ENCODE measurements at regions of chr7 and their contacts with region 1.

Region 1: GRCh38 chr7:55964261-55965099 is at the start of gene NIPSNAP2:
- DNase-seq: peak; percentile 24 to 81 (median 56)
- ATAC-seq: peak; percentile 93
- H3K4me3 ChIP-seq: peak within 1 kb of the TSS; percentile 59 to 63
- H3K4me3 Mint-ChIP-seq: peak within 1 kb of the TSS; percentile 87
- H3K27ac ChIP-seq: peak within 1 kb of the TSS; percentile 64 to 85
- H3K27ac Mint-ChIP-seq: peak within 1 kb of the TSS; percentile 93
- H3K4me1 ChIP-seq: peaks cover 15% of the 10 kb centered on the region
- H3K4me1 Mint-ChIP-seq: peaks cover 42% of the 10 kb centered on the region
- H3K27me3 ChIP-seq: no peaks in the 10 kb centered on the region
- H3K27me3 Mint-ChIP-seq: no peaks in the 10 kb centered on the region
- CTCF ChIP-seq: peak; percentile 45
- total RNA-seq, gene NIPSNAP2: 36.5 to 38.9 TPM

Region 2: GRCh38 chr7:55280031-55280454 is 684.4 kb before region 1 on chr7:
- CTCF ChIA-PET with region 1: no interaction called
- POLR2A ChIA-PET with region 1: no interaction called
- intact Hi-C with region 1: loop called in 1 of 2 experiments (anchors 5 kb)
- DNase-seq: peak; percentile 26 to 82 (median 62)
- ATAC-seq: peak; percentile 74
- H3K4me3 ChIP-seq: no peak overlapping the region
- H3K4me3 Mint-ChIP-seq: no peak overlapping the region
- H3K27ac ChIP-seq: no peak overlapping the region
- H3K27ac Mint-ChIP-seq: no peak overlapping the region
- H3K4me1 ChIP-seq: no peaks in the 10 kb centered on the region
- H3K4me1 Mint-ChIP-seq: peaks cover 2% of the 10 kb centered on the region
- H3K27me3 ChIP-seq: no peaks in the 10 kb centered on the region
- H3K27me3 Mint-ChIP-seq: no peaks in the 10 kb centered on the region
- CTCF ChIP-seq: peak; percentile 75

Region 3: GRCh38 chr7:55572378-55573233 is 391.9 kb before region 1 on chr7 and contains the start of gene VOPP1:
- CTCF ChIA-PET with region 1: interaction called, 4 read pairs
- POLR2A ChIA-PET with region 1: interaction called, 3 read pairs
- intact Hi-C with region 1: loop called in 1 of 2 experiments (anchors 10 kb)
- DNase-seq: peak; percentile 25 to 88 (median 57)
- ATAC-seq: peak; percentile 44
- H3K4me3 ChIP-seq: peak within 1 kb of the TSS; percentile 74 to 80
- H3K4me3 Mint-ChIP-seq: peak within 1 kb of the TSS; percentile 92
- H3K27ac ChIP-seq: peak within 1 kb of the TSS; percentile 66 to 80
- H3K27ac Mint-ChIP-seq: peak within 1 kb of the TSS; percentile 91
- H3K4me1 ChIP-seq: peaks cover 48% of the 10 kb centered on the region
- H3K4me1 Mint-ChIP-seq: peaks cover 56% of the 10 kb centered on the region
- H3K27me3 ChIP-seq: no peaks in the 10 kb centered on the region
- H3K27me3 Mint-ChIP-seq: no peaks in the 10 kb centered on the region
- CTCF ChIP-seq: no peak
- total RNA-seq, gene VOPP1: 38.7 to 38.9 TPM

Region 4: DNA sequence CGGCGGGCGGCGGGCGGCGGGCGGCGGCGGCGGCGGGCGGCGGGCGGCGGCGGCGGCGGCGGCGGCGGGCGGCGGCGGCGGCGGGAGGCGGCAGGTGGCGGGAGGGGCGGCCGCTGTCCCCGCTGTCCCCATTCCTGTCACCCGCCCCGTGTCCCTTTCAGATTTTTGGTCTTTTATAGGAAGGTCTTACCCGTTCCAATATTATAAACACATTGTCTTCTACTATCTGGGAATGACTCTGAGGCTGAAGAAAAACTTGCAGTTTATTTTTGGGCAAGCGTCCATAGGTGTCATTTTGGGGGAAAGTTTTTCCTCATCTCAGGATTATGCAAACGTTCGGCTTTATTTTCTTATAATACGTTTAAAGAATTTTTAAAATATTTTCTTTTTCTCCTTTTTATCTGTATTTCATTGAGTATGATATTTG is 76.6 kb before region 1 on chr7:
- CTCF ChIA-PET with region 1: no interaction called
- POLR2A ChIA-PET with region 1: no interaction called
- intact Hi-C with region 1: loop called in 1 of 2 experiments (anchors 2 kb)
- DNase-seq: peak in 2 of 9 experiments; percentile 5 to 38
- ATAC-seq: peak; percentile 15
- H3K4me3 ChIP-seq: peak overlapping the region in 1 of 2 experiments; percentile 58
- H3K4me3 Mint-ChIP-seq: peak overlapping the region; percentile 86
- H3K27ac ChIP-seq: no peak overlapping the region
- H3K27ac Mint-ChIP-seq: peak overlapping the region; percentile 87
- H3K4me1 ChIP-seq: no peaks in the 10 kb centered on the region
- H3K4me1 Mint-ChIP-seq: peaks cover 8% of the 10 kb centered on the region
- H3K27me3 ChIP-seq: no peaks in the 10 kb centered on the region
- H3K27me3 Mint-ChIP-seq: no peaks in the 10 kb centered on the region
- CTCF ChIP-seq: no peak

Region 5: DNA sequence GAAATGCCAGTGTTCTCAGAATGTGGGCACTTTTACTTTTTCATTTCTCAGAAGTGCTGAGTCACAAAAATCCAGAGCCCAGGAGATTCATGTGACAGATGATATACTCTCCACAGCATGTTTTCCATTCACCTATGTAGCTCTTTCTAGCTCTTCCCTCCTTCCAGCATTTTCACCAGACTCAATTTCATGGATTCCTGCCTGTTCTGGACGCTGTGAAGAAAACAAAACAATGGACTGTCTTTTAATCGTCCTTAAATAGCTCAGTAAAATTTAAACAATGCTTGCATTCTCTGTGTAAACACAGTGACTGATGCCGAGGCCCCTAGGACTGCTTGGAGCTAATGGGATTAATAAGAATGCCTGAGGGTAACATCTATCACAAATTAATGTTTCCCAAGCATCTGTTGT is 51.7 kb before region 1 on chr7:
- CTCF ChIA-PET with region 1: no interaction called
- POLR2A ChIA-PET with region 1: no interaction called
- intact Hi-C with region 1: no loop called
- DNase-seq: no peak
- ATAC-seq: no peak
- H3K4me3 ChIP-seq: no peak overlapping the region
- H3K4me3 Mint-ChIP-seq: no peak overlapping the region
- H3K27ac ChIP-seq: no peak overlapping the region
- H3K27ac Mint-ChIP-seq: no peak overlapping the region
- H3K4me1 ChIP-seq: no peaks in the 10 kb centered on the region
- H3K4me1 Mint-ChIP-seq: no peaks in the 10 kb centered on the region
- H3K27me3 ChIP-seq: no peaks in the 10 kb centered on the region
- H3K27me3 Mint-ChIP-seq: no peaks in the 10 kb centered on the region
- CTCF ChIP-seq: no peak

Region 6: GRCh38 chr7:55977831-55978230 is 13.4 kb after region 1 on chr7:
- CTCF ChIA-PET with region 1: interaction called, 10 read pairs
- POLR2A ChIA-PET with region 1: no interaction called
- intact Hi-C with region 1: no loop called
- DNase-seq: no peak
- ATAC-seq: no peak
- H3K4me3 ChIP-seq: no peak overlapping the region
- H3K4me3 Mint-ChIP-seq: no peak overlapping the region
- H3K27ac ChIP-seq: no peak overlapping the region
- H3K27ac Mint-ChIP-seq: peak overlapping the region; percentile 4
- H3K4me1 ChIP-seq: no peaks in the 10 kb centered on the region
- H3K4me1 Mint-ChIP-seq: peaks cover 8% of the 10 kb centered on the region
- H3K27me3 ChIP-seq: no peaks in the 10 kb centered on the region
- H3K27me3 Mint-ChIP-seq: no peaks in the 10 kb centered on the region
- CTCF ChIP-seq: no peak

Region 7: DNA sequence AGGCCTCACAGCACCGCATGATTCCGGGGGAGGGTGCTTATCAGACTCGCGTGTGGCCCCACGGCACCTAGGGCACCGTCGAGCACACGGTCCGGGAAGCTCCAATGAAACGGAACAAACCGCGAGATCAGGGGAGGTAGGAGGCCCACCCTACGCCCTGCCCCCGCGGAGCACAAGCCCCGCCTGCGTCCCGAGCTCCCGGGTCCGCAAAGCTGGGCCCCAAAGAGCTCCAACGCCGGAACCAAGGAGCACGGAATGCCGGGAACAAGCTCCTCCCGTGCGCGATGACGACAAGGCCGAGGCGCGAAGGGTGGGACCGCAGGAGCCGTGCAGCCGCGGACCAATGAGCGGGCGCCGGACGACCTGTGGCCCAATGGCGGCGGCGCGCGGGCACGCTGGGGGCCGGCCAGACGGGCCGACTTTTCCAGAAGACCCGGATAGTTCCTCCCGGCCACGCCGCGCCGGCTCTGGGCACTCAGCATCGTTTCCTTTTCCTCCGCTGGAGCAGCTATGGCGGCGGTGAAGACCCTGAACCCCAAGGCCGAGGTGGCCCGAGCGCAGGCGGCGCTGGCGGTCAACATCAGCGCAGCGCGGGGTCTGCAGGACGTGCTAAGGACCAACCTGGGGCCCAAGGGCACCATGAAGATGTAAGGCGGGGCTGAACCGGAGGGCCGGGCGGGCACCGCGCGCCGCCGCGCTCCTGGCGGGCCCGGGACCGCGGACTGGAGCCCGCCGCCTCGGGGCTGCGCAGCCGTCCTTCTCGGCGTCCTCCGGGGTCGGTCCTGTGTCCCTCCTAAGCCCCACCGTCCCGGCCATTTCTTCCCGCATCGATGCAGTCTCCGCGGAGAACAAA is 87.1 kb after region 1 on chr7 and contains the starts of genes CCT6A and PSPH:
- CTCF ChIA-PET with region 1: no interaction called
- POLR2A ChIA-PET with region 1: no interaction called
- intact Hi-C with region 1: loop called in 1 of 2 experiments (anchors 5 kb)
- DNase-seq: peak; percentile 64 to 95 (median 88)
- ATAC-seq: peak; percentile 86
- H3K4me3 ChIP-seq: peak within 1 kb of the TSS; percentile 72 to 81
- H3K4me3 Mint-ChIP-seq: peak within 1 kb of the TSS; percentile 92
- H3K27ac ChIP-seq: peak within 1 kb of the TSS; percentile 62 to 83
- H3K27ac Mint-ChIP-seq: peak within 1 kb of the TSS; percentile 95
- H3K4me1 ChIP-seq: peaks cover 29% of the 10 kb centered on the region
- H3K4me1 Mint-ChIP-seq: peaks cover 47% of the 10 kb centered on the region
- H3K27me3 ChIP-seq: no peaks in the 10 kb centered on the region
- H3K27me3 Mint-ChIP-seq: no peaks in the 10 kb centered on the region
- CTCF ChIP-seq: no peak
- total RNA-seq, gene CCT6A: 36.3 to 40.9 TPM
- total RNA-seq, gene PSPH: 0.89 to 1.1 TPM